Tibial artery (tissue), 4 donors: ENCODE measurements at regions of chr3 and their contacts with region 1.

Region 1: GRCh38 chr3:49671291-49672288 is 2.6 kb upstream of the APEH start:
- DNase-seq: no peak
- H3K4me3 ChIP-seq: no peak overlapping the region
- H3K27ac ChIP-seq: no peak overlapping the region
- H3K4me1 ChIP-seq: peaks cover 0 to 20% (median 15%) of the 10 kb centered on the region in 4 donors
- H3K27me3 ChIP-seq: peaks cover 0 to 5% of the 10 kb centered on the region in 2 donors
- CTCF ChIP-seq: peak; percentile 66 to 79

Region 2: GRCh38 chr3:49539659-49540560 is 131.7 kb before region 1 on chr3:
- intact Hi-C with region 1: loop called (anchors 1 kb)
- DNase-seq: peak; percentile 92 to 97
- H3K4me3 ChIP-seq: peak overlapping the region; percentile 49 to 58
- H3K27ac ChIP-seq: peak overlapping the region; percentile 81 to 84
- H3K4me1 ChIP-seq: peaks cover 0 to 15% (median 12%) of the 10 kb centered on the region in 4 donors
- H3K27me3 ChIP-seq: no peaks in the 10 kb centered on the region
- CTCF ChIP-seq: peak; percentile 92 to 94